ENCODE measurements at regions of chr2 and their contacts with region 1.

Region 1: GRCh38 chr2:182977463-182977862 is 60.8 kb downstream of the NCKAP1 start:
- DNase-seq: no peak
- H3K4me3 ChIP-seq: no peak overlapping the region
- H3K27ac ChIP-seq: no peak overlapping the region
- H3K4me1 ChIP-seq: no peaks in the 10 kb centered on the region
- H3K27me3 ChIP-seq: no peaks in the 10 kb centered on the region
- CTCF ChIP-seq: no peak
- POLR2A ChIP-seq: no peak

Region 2: GRCh38 chr2:182784777-182785176 is 192.7 kb before region 1 on chr2:
- intact Hi-C with region 1: loop called (anchors 5 kb)
- DNase-seq: no peak
- H3K4me3 ChIP-seq: no peak overlapping the region
- H3K27ac ChIP-seq: no peak overlapping the region
- H3K4me1 ChIP-seq: no peaks in the 10 kb centered on the region
- H3K27me3 ChIP-seq: no peaks in the 10 kb centered on the region
- CTCF ChIP-seq: peak; percentile 19 to 64 (median 56)
- POLR2A ChIP-seq: no peak

Region 3: GRCh38 chr2:182798736-182799135 is 178.7 kb before region 1 on chr2:
- intact Hi-C with region 1: no loop called
- DNase-seq: no peak
- H3K4me3 ChIP-seq: no peak overlapping the region
- H3K27ac ChIP-seq: no peak overlapping the region
- H3K4me1 ChIP-seq: no peaks in the 10 kb centered on the region
- H3K27me3 ChIP-seq: no peaks in the 10 kb centered on the region
- CTCF ChIP-seq: no peak
- POLR2A ChIP-seq: no peak

Region 4: GRCh38 chr2:183070942-183071844 is 93.7 kb after region 1 on chr2:
- intact Hi-C with region 1: no loop called
- DNase-seq: peak; percentile 23 to 69 (median 57)
- H3K4me3 ChIP-seq: no peak overlapping the region
- H3K27ac ChIP-seq: no peak overlapping the region
- H3K4me1 ChIP-seq: no peaks in the 10 kb centered on the region
- H3K27me3 ChIP-seq: no peaks in the 10 kb centered on the region
- CTCF ChIP-seq: peak in 5 of 6 experiments; percentile 16 to 44 (median 23)
- POLR2A ChIP-seq: no peak

Measured in adrenal gland (tissue), 19 donors.